ENCODE measurements at regions of chr1 and their contacts with region 1.

Region 1: GRCh38 chr1:116485071-116485735 is 85.6 kb downstream of the CD58 start:
- DNase-seq: peak; percentile 88
- ATAC-seq: peak; percentile 89
- H3K4me3 ChIP-seq: no peak overlapping the region
- H3K27ac ChIP-seq: peak overlapping the region; percentile 63
- H3K4me1 ChIP-seq: peaks cover 100% of the 10 kb centered on the region
- H3K27me3 ChIP-seq: no peaks in the 10 kb centered on the region
- CTCF ChIP-seq: peak; percentile 99
- EP300 ChIP-seq: peak in 1 of 2 experiments; percentile 63; a peak in 2 of 4 replicates
- POLR2A ChIP-seq: no peak
- RAD21 ChIP-seq: peak; percentile 99

Region 2: GRCh38 chr1:116151739-116152576 is 333.2 kb before region 1 on chr1:
- CTCF ChIA-PET with region 1: no interaction called
- POLR2A ChIA-PET with region 1: interaction called, 3 read pairs
- in situ Hi-C with region 1: no loop called
- intact Hi-C with region 1: loop called (anchors 5 kb)
- DNase-seq: no peak
- ATAC-seq: peak; percentile 72
- H3K4me3 ChIP-seq: peak overlapping the region; percentile 44 to 69 (median 54); a peak in 5 of 6 replicates
- H3K27ac ChIP-seq: peak overlapping the region; percentile 87
- H3K4me1 ChIP-seq: peaks cover 58% of the 10 kb centered on the region
- H3K27me3 ChIP-seq: peaks cover 0 to 2% of the 10 kb centered on the region in 2 experiments; a peak in 1 of 5 replicates
- CTCF ChIP-seq: peak; percentile 81
- EP300 ChIP-seq: no peak
- POLR2A ChIP-seq: 0 out of 4 replicates have a peak, but pooled peaks of 1 of the 2 experiments have one; percentile 20
- RAD21 ChIP-seq: peak; percentile 90

Region 3: GRCh38 chr1:116372587-116373444 is 112.4 kb before region 1 on chr1 and contains the start of gene ATP1A1:
- CTCF ChIA-PET with region 1: no interaction called
- POLR2A ChIA-PET with region 1: interaction called, 24 read pairs
- in situ Hi-C with region 1: no loop called
- intact Hi-C with region 1: loop called (anchors 2 kb)
- DNase-seq: peak; percentile 85
- ATAC-seq: peak; percentile 88
- H3K4me3 ChIP-seq: peak within 1 kb of the TSS; percentile 79 to 89 (median 84)
- H3K27ac ChIP-seq: peak within 1 kb of the TSS; percentile 77
- H3K4me1 ChIP-seq: peaks cover 45% of the 10 kb centered on the region
- H3K27me3 ChIP-seq: peaks cover 0 to 7% of the 10 kb centered on the region in 2 experiments; a peak in 1 of 5 replicates
- CTCF ChIP-seq: peak; percentile 54
- EP300 ChIP-seq: peak in 1 of 2 experiments; percentile 69; a peak in 1 of 4 replicates
- POLR2A ChIP-seq: peak; percentile 88 to 98
- RAD21 ChIP-seq: peak; percentile 77
- total RNA-seq, gene ATP1A1: 210 and 280 TPM in 2 replicates

Region 4: GRCh38 chr1:116411784-116412479 is 73.3 kb before region 1 on chr1:
- CTCF ChIA-PET with region 1: no interaction called
- POLR2A ChIA-PET with region 1: interaction called, 55 read pairs
- in situ Hi-C with region 1: loop called (anchors 10 kb)
- intact Hi-C with region 1: loop called (anchors 2 kb)
- DNase-seq: peak; percentile 97
- ATAC-seq: peak; percentile 93
- H3K4me3 ChIP-seq: peak overlapping the region in 1 of 3 experiments; percentile 23; a peak in 1 of 6 replicates
- H3K27ac ChIP-seq: peak overlapping the region; percentile 74
- H3K4me1 ChIP-seq: peaks cover 62% of the 10 kb centered on the region
- H3K27me3 ChIP-seq: no peaks in the 10 kb centered on the region
- CTCF ChIP-seq: no peak
- EP300 ChIP-seq: peak in 1 of 2 experiments; percentile 60; a peak in 2 of 4 replicates
- POLR2A ChIP-seq: no peak
- RAD21 ChIP-seq: no peak

Region 5: GRCh38 chr1:116448813-116449281 is 36.4 kb before region 1 on chr1:
- CTCF ChIA-PET with region 1: no interaction called
- POLR2A ChIA-PET with region 1: no interaction called
- in situ Hi-C with region 1: no loop called
- intact Hi-C with region 1: no loop called
- DNase-seq: peak; percentile 56
- ATAC-seq: peak; percentile 92
- H3K4me3 ChIP-seq: no peak overlapping the region; a peak in 1 of 6 replicates
- H3K27ac ChIP-seq: peak overlapping the region; percentile 10
- H3K4me1 ChIP-seq: peaks cover 61% of the 10 kb centered on the region
- H3K27me3 ChIP-seq: no peaks in the 10 kb centered on the region
- CTCF ChIP-seq: no peak
- EP300 ChIP-seq: no peak
- POLR2A ChIP-seq: no peak
- RAD21 ChIP-seq: no peak

Region 6: GRCh38 chr1:116465845-116466685 is 19.1 kb before region 1 on chr1:
- CTCF ChIA-PET with region 1: no interaction called
- POLR2A ChIA-PET with region 1: interaction called, 18 read pairs
- in situ Hi-C with region 1: no loop called
- intact Hi-C with region 1: loop called (anchors 2 kb)
- DNase-seq: peak; percentile 93
- ATAC-seq: peak; percentile 100
- H3K4me3 ChIP-seq: peak overlapping the region; percentile 69 to 79 (median 71)
- H3K27ac ChIP-seq: peak overlapping the region; percentile 99
- H3K4me1 ChIP-seq: peaks cover 70% of the 10 kb centered on the region
- H3K27me3 ChIP-seq: no peaks in the 10 kb centered on the region; a peak in 1 of 5 replicates
- CTCF ChIP-seq: peak; percentile 47
- EP300 ChIP-seq: peak; percentile 71 to 85; a peak in 3 of 4 replicates
- POLR2A ChIP-seq: peak; percentile 74 to 86
- RAD21 ChIP-seq: peak; percentile 35; the same call in 1 of the 2 replicates

Region 7: GRCh38 chr1:116498789-116499628 is 13.8 kb after region 1 on chr1:
- CTCF ChIA-PET with region 1: interaction called, 5 read pairs
- POLR2A ChIA-PET with region 1: interaction called, 16 read pairs
- in situ Hi-C with region 1: no loop called
- intact Hi-C with region 1: no loop called
- DNase-seq: peak; percentile 68
- ATAC-seq: peak; percentile 66
- H3K4me3 ChIP-seq: no peak overlapping the region
- H3K27ac ChIP-seq: peak overlapping the region; percentile 16
- H3K4me1 ChIP-seq: peaks cover 61% of the 10 kb centered on the region
- H3K27me3 ChIP-seq: no peaks in the 10 kb centered on the region
- CTCF ChIP-seq: peak; percentile 88
- EP300 ChIP-seq: no peak
- POLR2A ChIP-seq: no peak
- RAD21 ChIP-seq: peak; percentile 94